Right cardiac atrium (tissue), 5 donors: ENCODE measurements at regions of chr5 and their contacts with region 1.

Region 1: GRCh38 chr5:116947691-116948528 is 373.3 kb upstream of the SEMA6A start:
- DNase-seq: peak; percentile 38 to 76 (median 71)
- ATAC-seq: peak; percentile 61 to 67
- H3K4me3 ChIP-seq: no peak overlapping the region
- H3K27ac ChIP-seq: no peak overlapping the region
- H3K4me1 ChIP-seq: no peaks in the 10 kb centered on the region
- H3K27me3 ChIP-seq: no peaks in the 10 kb centered on the region

Region 2: DNA sequence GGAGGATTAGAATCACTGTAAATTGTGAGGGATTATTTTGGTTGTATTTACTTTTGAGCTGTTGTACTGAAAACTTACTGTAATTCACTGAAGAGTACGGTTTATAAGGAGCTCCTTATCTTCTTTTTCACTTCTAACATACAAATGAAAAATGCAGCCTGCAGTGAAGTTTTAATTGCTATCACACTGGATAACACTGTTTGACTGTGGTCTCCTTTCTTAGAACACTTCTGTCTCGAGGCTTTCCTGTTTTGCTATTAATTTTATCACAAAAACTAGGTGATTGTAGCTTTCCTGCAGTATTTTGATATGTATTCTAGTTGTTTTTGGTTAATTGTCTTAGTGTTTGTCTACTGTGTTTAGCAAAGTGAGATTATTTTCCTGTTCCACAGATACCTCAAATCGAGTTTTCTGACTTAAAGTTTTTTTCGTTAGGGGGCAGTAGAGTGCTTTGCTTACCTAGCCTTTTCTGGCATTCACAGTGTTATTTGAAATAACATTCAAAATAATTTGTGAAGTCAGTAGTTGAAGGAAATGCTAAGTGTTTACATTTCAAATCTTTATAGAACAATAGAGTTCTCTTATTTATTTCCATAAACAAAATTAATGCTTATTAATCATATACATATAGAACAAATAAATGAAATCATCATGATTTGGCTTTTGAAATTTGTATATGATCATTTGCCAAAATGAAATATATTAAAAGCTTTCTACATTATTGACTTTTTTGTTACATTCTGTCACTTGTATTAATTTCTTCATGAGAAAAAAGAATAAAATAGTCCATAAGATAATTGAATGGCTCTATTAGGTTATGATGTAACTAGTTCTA is 810.1 kb before region 1 on chr5:
- intact Hi-C with region 1: loop called in 1 of 4 experiments (anchors 10 kb)
- DNase-seq: no peak
- ATAC-seq: peak in 1 of 2 donors; percentile 50
- H3K4me3 ChIP-seq: no peak overlapping the region
- H3K27ac ChIP-seq: no peak overlapping the region
- H3K4me1 ChIP-seq: no peaks in the 10 kb centered on the region
- H3K27me3 ChIP-seq: no peaks in the 10 kb centered on the region

Region 3: GRCh38 chr5:116574367-116575325 is 373.3 kb before region 1 on chr5 and contains the start of gene SEMA6A:
- intact Hi-C with region 1: loop called in 2 of 4 experiments (anchors 5 kb)
- DNase-seq: peak; percentile 91 to 96 (median 96)
- ATAC-seq: peak; percentile 92
- H3K4me3 ChIP-seq: peak within 1 kb of the TSS; percentile 83
- H3K27ac ChIP-seq: peak within 1 kb of the TSS; percentile 30
- H3K4me1 ChIP-seq: no peaks in the 10 kb centered on the region
- H3K27me3 ChIP-seq: no peaks in the 10 kb centered on the region
- total RNA-seq, gene SEMA6A: 4.0 to 9.4 (median 4.4) TPM

Region 4: GRCh38 chr5:116788851-116789403 is 159.0 kb before region 1 on chr5:
- intact Hi-C with region 1: loop called in 1 of 4 experiments (anchors 10 kb)
- DNase-seq: no peak
- ATAC-seq: peak; percentile 70 to 79
- H3K4me3 ChIP-seq: no peak overlapping the region
- H3K27ac ChIP-seq: no peak overlapping the region
- H3K4me1 ChIP-seq: no peaks in the 10 kb centered on the region
- H3K27me3 ChIP-seq: no peaks in the 10 kb centered on the region